ENCODE measurements at regions of chr1 and their contacts with region 1.

Region 1: GRCh38 chr1:6245086-6245868 is 1.3 kb downstream of the HES3 start:
- DNase-seq: peak; percentile 61 to 89 (median 74)
- ATAC-seq: peak; percentile 86
- H3K4me3 ChIP-seq: no peak overlapping the region
- H3K4me3 Mint-ChIP-seq: no peak overlapping the region
- H3K27ac ChIP-seq: no peak overlapping the region
- H3K27ac Mint-ChIP-seq: no peak overlapping the region
- H3K4me1 ChIP-seq: peaks cover 15% of the 10 kb centered on the region
- H3K4me1 Mint-ChIP-seq: peaks cover 11% of the 10 kb centered on the region
- H3K27me3 ChIP-seq: peaks cover 51 to 55% of the 10 kb centered on the region in 2 experiments
- H3K27me3 Mint-ChIP-seq: peaks cover 52% of the 10 kb centered on the region
- CTCF ChIP-seq: peak; percentile 65

Region 2: GRCh38 chr1:6052543-6053205 is 192.6 kb before region 1 on chr1:
- CTCF ChIA-PET with region 1: interaction called, 3 read pairs
- POLR2A ChIA-PET with region 1: no interaction called
- intact Hi-C with region 1: loop called in 1 of 2 experiments (anchors 1 kb)
- DNase-seq: peak; percentile 11 to 66 (median 57)
- ATAC-seq: peak; percentile 57
- H3K4me3 ChIP-seq: no peak overlapping the region
- H3K4me3 Mint-ChIP-seq: no peak overlapping the region
- H3K27ac ChIP-seq: no peak overlapping the region
- H3K27ac Mint-ChIP-seq: no peak overlapping the region
- H3K4me1 ChIP-seq: no peaks in the 10 kb centered on the region
- H3K4me1 Mint-ChIP-seq: peaks cover 22% of the 10 kb centered on the region
- H3K27me3 ChIP-seq: no peaks in the 10 kb centered on the region
- H3K27me3 Mint-ChIP-seq: no peaks in the 10 kb centered on the region
- CTCF ChIP-seq: no peak

Region 3: GRCh38 chr1:6265151-6265550 is 19.9 kb after region 1 on chr1:
- CTCF ChIA-PET with region 1: interaction called, 16 read pairs
- POLR2A ChIA-PET with region 1: no interaction called
- intact Hi-C with region 1: loop called in 1 of 2 experiments (anchors 2 kb)
- DNase-seq: no peak
- ATAC-seq: no peak
- H3K4me3 ChIP-seq: no peak overlapping the region
- H3K4me3 Mint-ChIP-seq: no peak overlapping the region
- H3K27ac ChIP-seq: no peak overlapping the region
- H3K27ac Mint-ChIP-seq: no peak overlapping the region
- H3K4me1 ChIP-seq: no peaks in the 10 kb centered on the region
- H3K4me1 Mint-ChIP-seq: peaks cover 2% of the 10 kb centered on the region
- H3K27me3 ChIP-seq: no peaks in the 10 kb centered on the region
- H3K27me3 Mint-ChIP-seq: peaks cover 7% of the 10 kb centered on the region
- CTCF ChIP-seq: no peak

Region 4: GRCh38 chr1:6393400-6394187 is 148.3 kb after region 1 on chr1 and contains the start of gene ACOT7:
- CTCF ChIA-PET with region 1: interaction called, 8 read pairs
- POLR2A ChIA-PET with region 1: no interaction called
- intact Hi-C with region 1: loop called in 1 of 2 experiments (anchors 1 kb)
- DNase-seq: peak; percentile 79 to 94 (median 89)
- ATAC-seq: peak; percentile 93
- H3K4me3 ChIP-seq: peak within 1 kb of the TSS; percentile 33 to 62
- H3K4me3 Mint-ChIP-seq: peak within 1 kb of the TSS; percentile 88
- H3K27ac ChIP-seq: peak within 1 kb of the TSS; percentile 54 to 88
- H3K27ac Mint-ChIP-seq: peak within 1 kb of the TSS; percentile 90
- H3K4me1 ChIP-seq: peaks cover 15% of the 10 kb centered on the region
- H3K4me1 Mint-ChIP-seq: peaks cover 24% of the 10 kb centered on the region
- H3K27me3 ChIP-seq: no peaks in the 10 kb centered on the region
- H3K27me3 Mint-ChIP-seq: no peaks in the 10 kb centered on the region
- CTCF ChIP-seq: no peak
- total RNA-seq, gene ACOT7: 2.8 to 3.1 TPM

Region 5: DNA sequence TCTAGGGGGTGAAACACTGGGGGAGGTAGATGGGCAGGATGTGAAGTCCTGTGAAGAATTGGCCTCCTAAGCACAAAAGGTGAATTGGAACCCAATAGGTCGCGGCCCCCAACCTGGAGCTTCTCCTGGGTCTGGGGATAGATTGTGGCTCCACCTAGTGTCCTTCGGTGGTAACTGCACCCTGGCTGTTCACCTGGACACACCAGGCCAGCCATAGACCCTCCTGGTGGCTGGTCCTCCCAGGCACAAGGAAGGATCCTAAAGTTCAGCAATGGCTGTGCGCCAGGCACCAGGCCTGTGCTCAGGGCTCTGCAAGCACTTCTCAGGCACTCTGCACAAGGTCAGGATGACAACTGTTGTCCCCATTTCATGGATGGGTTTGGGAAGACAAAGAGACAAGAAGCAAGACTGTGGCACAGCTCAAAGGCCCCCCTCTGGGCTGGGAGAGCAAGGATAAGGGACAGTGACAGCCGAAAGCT is 192.8 kb after region 1 on chr1:
- CTCF ChIA-PET with region 1: interaction called, 30 read pairs
- POLR2A ChIA-PET with region 1: no interaction called
- intact Hi-C with region 1: loop called (anchors 1 kb)
- DNase-seq: peak; percentile 54 to 82 (median 72)
- ATAC-seq: peak; percentile 75
- H3K4me3 ChIP-seq: no peak overlapping the region
- H3K4me3 Mint-ChIP-seq: no peak overlapping the region
- H3K27ac ChIP-seq: no peak overlapping the region
- H3K27ac Mint-ChIP-seq: no peak overlapping the region
- H3K4me1 ChIP-seq: peaks cover 6% of the 10 kb centered on the region
- H3K4me1 Mint-ChIP-seq: peaks cover 12% of the 10 kb centered on the region
- H3K27me3 ChIP-seq: peaks cover 0 to 8% of the 10 kb centered on the region in 2 experiments
- H3K27me3 Mint-ChIP-seq: peaks cover 26% of the 10 kb centered on the region
- CTCF ChIP-seq: peak; percentile 92

Region 6: DNA sequence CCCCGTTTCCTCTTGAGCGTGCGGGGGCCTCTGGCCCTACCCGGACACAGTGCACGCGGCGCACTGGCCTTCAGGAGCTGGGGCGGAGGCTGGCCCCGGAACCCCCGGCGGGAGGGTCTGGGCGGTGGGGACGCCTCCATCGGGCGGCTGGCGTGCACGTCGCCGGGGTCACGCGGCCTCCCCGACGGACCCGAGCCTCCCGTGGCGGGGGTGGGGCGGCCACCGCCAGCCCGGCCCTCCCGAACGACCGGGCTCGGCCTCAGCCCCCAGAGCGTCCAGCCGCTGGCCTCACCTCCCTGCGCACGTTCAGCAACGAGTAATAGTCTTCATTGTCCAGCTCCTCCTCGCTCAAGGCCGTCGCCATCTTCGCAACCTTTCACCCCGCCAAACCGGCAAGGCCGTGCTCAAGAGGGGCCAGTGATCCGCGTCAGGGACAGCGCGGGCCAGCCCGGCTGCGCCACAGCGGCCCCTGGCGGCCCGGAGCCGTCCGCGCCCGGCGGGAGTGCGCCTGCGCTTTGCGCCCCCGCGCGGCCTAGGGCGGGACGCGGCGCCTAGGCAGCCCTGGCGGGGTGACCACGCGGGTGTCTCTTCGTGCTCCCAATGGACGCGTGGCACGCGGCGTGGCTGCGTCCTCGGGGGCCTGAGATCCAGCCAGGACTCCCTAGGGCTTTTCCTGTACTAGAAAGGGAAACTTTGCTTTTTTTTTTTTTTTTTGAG is 456.3 kb after region 1 on chr1 and contains the start of gene DNAJC11:
- CTCF ChIA-PET with region 1: no interaction called
- POLR2A ChIA-PET with region 1: no interaction called
- intact Hi-C with region 1: loop called in 1 of 2 experiments (anchors 10 kb)
- DNase-seq: peak; percentile 82 to 96 (median 89)
- ATAC-seq: peak; percentile 96
- H3K4me3 ChIP-seq: peak within 1 kb of the TSS; percentile 79 to 87
- H3K4me3 Mint-ChIP-seq: peak within 1 kb of the TSS; percentile 94
- H3K27ac ChIP-seq: peak within 1 kb of the TSS; percentile 68 to 70
- H3K27ac Mint-ChIP-seq: peak within 1 kb of the TSS; percentile 95
- H3K4me1 ChIP-seq: peaks cover 11% of the 10 kb centered on the region
- H3K4me1 Mint-ChIP-seq: peaks cover 25% of the 10 kb centered on the region
- H3K27me3 ChIP-seq: no peaks in the 10 kb centered on the region
- H3K27me3 Mint-ChIP-seq: no peaks in the 10 kb centered on the region
- CTCF ChIP-seq: peak; percentile 89
- total RNA-seq, gene DNAJC11: 23.3 to 24.4 TPM

Region 7: GRCh38 chr1:6724516-6725141 is 479.4 kb after region 1 on chr1:
- CTCF ChIA-PET with region 1: no interaction called
- POLR2A ChIA-PET with region 1: no interaction called
- intact Hi-C with region 1: no loop called
- DNase-seq: no peak
- ATAC-seq: no peak
- H3K4me3 ChIP-seq: no peak overlapping the region
- H3K4me3 Mint-ChIP-seq: no peak overlapping the region
- H3K27ac ChIP-seq: no peak overlapping the region
- H3K27ac Mint-ChIP-seq: no peak overlapping the region
- H3K4me1 ChIP-seq: no peaks in the 10 kb centered on the region
- H3K4me1 Mint-ChIP-seq: no peaks in the 10 kb centered on the region
- H3K27me3 ChIP-seq: no peaks in the 10 kb centered on the region
- H3K27me3 Mint-ChIP-seq: peaks cover 7% of the 10 kb centered on the region
- CTCF ChIP-seq: no peak